ENCODE measurements at regions of chr6 and their contacts with region 1.

Region 1: GRCh38 chr6:107489636-107490565 is at the start of gene SOBP:
- DNase-seq: no peak
- ATAC-seq: peak; percentile 80
- H3K4me3 ChIP-seq: peak within 1 kb of the TSS; percentile 78 to 86
- H3K27ac ChIP-seq: peak within 1 kb of the TSS; percentile 65
- H3K4me1 ChIP-seq: peaks cover 40% of the 10 kb centered on the region
- H3K27me3 ChIP-seq: peaks cover 4% of the 10 kb centered on the region; the same call in 1 of the 2 replicates
- CTCF ChIP-seq: no peak; the same call in 1 of the 2 replicates
- total RNA-seq, gene SOBP: 9.0 TPM

Region 2: DNA sequence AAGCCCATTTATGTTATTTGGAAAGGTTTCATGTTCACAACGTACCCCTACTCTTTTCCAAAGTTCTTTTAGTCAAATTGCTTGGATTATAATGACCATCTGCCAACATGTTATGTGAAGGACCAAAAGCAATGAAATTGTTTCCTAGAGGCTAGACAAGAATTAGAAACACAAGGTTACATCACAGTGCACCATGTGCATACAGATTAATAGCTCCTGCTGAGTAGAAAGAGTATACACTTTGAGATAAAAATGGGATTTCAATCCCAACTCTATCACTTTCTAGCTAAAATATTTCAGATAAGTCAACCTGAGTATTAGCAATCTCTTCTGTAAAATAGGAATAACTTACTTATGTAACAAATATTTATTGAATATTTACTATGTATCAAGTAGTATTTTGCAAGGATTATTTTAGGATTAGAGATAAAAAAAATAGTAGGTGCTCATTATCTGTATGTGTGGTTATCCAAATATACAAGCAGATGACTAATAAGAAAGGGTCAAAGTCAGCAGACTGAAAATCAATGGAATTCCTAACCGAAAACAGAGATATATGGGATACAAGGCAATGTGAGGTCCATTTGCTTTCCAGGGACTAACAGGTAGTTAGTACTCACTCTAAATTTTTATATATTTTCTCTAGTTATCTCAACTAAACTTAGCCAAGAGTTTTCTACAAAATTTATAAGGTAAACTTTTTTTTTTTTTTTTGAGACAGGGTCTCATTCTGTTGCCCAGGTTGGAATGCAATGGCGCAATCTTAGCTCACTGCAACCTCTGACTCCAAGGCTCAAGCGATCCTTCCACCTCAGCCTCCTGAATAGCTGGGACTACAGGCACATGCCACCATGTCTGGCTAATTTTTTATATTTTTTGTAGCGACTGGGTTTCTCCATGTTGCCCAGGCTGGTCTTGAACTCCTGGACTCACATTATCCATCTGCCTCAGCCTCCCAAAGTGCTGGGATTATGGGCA is 158.2 kb before region 1 on chr6:
- CTCF ChIA-PET with region 1: no interaction called
- POLR2A ChIA-PET with region 1: interaction called, 10 read pairs
- in situ Hi-C with region 1: no loop called
- intact Hi-C with region 1: no loop called
- DNase-seq: no peak
- ATAC-seq: no peak
- H3K4me3 ChIP-seq: no peak overlapping the region
- H3K27ac ChIP-seq: no peak overlapping the region
- H3K4me1 ChIP-seq: no peaks in the 10 kb centered on the region
- H3K27me3 ChIP-seq: no peaks in the 10 kb centered on the region
- CTCF ChIP-seq: no peak

Region 3: GRCh38 chr6:107645800-107646575 is 156.1 kb after region 1 on chr6:
- CTCF ChIA-PET with region 1: no interaction called
- POLR2A ChIA-PET with region 1: interaction called, 18 read pairs
- in situ Hi-C with region 1: no loop called
- intact Hi-C with region 1: no loop called
- DNase-seq: no peak
- ATAC-seq: 0 out of 2 replicates have a peak, but pooled peaks have one; percentile 27
- H3K4me3 ChIP-seq: no peak overlapping the region
- H3K27ac ChIP-seq: peak overlapping the region; percentile 52; the same call in 1 of the 2 replicates
- H3K4me1 ChIP-seq: peaks cover 35% of the 10 kb centered on the region
- H3K27me3 ChIP-seq: no peaks in the 10 kb centered on the region
- CTCF ChIP-seq: no peak

Region 4: GRCh38 chr6:107657755-107658461 is 168.0 kb after region 1 on chr6:
- CTCF ChIA-PET with region 1: no interaction called
- POLR2A ChIA-PET with region 1: no interaction called
- in situ Hi-C with region 1: no loop called
- intact Hi-C with region 1: loop called (anchors 5 kb)
- DNase-seq: peak; percentile 38
- ATAC-seq: peak; percentile 86
- H3K4me3 ChIP-seq: peak overlapping the region; percentile 25 to 54
- H3K27ac ChIP-seq: peak overlapping the region; percentile 89
- H3K4me1 ChIP-seq: peaks cover 73% of the 10 kb centered on the region
- H3K27me3 ChIP-seq: no peaks in the 10 kb centered on the region
- CTCF ChIP-seq: no peak